ENCODE measurements at regions of chr3 and their contacts with region 1.

Region 1: GRCh38 chr3:53160660-53161449 is at the start of gene PRKCD:
- DNase-seq: peak; percentile 16
- H3K4me3 ChIP-seq: peak within 1 kb of the TSS; percentile 78
- CTCF ChIP-seq: peak; percentile 62

Region 2: GRCh38 chr3:53150247-53151085 is 10.4 kb before region 1 on chr3:
- CTCF ChIA-PET with region 1: interaction called, 14 read pairs
- POLR2A ChIA-PET with region 1: no interaction called
- DNase-seq: no peak
- H3K4me3 ChIP-seq: no peak overlapping the region
- CTCF ChIP-seq: no peak

Region 3: GRCh38 chr3:53180305-53181023 is 19.6 kb after region 1 on chr3:
- CTCF ChIA-PET with region 1: no interaction called
- POLR2A ChIA-PET with region 1: no interaction called
- DNase-seq: no peak
- H3K4me3 ChIP-seq: no peak overlapping the region
- CTCF ChIP-seq: no peak

Region 4: DNA sequence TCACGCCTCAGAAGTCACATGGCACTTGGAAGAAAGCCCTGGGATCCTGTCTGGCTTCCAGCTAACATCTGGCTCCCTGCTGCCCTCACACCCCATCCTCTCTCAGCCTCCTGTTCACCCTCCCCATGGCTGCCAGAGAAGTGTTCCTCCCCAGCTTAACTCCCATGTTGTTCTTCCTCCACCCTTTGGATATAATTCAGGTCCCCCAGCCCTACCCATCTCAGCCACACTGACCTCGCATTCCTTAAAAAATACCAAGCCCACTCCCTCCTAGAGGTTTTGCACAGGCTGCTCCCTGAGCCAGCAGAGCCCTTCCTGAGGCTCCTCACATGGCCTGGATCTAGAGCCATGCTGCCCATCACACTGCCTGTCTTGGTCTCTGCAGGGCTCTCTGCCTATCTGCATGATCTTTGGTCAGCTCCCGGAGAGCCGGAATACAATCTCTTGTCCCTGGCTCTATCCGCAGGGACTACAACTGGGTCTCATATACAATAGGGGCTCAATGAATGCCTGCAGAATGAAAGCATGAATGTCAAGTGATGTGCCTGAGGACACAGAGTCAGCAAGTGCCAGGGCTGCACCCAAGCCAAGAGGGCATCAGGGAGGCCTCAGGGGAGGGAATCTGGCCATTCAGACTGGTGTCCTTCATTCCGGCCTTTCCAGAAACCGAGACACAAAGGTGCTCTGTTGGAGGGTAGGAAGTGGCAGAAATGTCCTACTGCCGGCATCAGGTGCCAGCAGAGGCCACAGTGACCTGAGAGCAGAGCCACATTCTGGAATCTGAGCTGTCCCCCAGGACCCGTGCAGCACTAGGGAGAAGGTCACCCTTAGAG is 98.8 kb after region 1 on chr3:
- CTCF ChIA-PET with region 1: no interaction called
- POLR2A ChIA-PET with region 1: no interaction called
- DNase-seq: no peak
- H3K4me3 ChIP-seq: no peak overlapping the region
- CTCF ChIP-seq: no peak

Region 5: GRCh38 chr3:53416530-53416929 is 255.7 kb after region 1 on chr3:
- CTCF ChIA-PET with region 1: no interaction called
- POLR2A ChIA-PET with region 1: no interaction called
- DNase-seq: no peak
- H3K4me3 ChIP-seq: no peak overlapping the region
- CTCF ChIP-seq: no peak

Region 6: GRCh38 chr3:53478166-53478830 is 317.4 kb after region 1 on chr3:
- CTCF ChIA-PET with region 1: no interaction called
- POLR2A ChIA-PET with region 1: no interaction called
- DNase-seq: no peak
- H3K4me3 ChIP-seq: no peak overlapping the region
- CTCF ChIP-seq: no peak

Measured in AG04449 (cell line).